ENCODE measurements at regions of chr12 and their contacts with region 1.

Region 1: GRCh38 chr12:52992699-52993557 is 13.3 kb upstream of the EIF4B start:
- DNase-seq: peak; percentile 66
- H3K4me3 Mint-ChIP-seq: peak overlapping the region; percentile 2
- H3K27ac Mint-ChIP-seq: peak overlapping the region; percentile 85
- H3K4me1 Mint-ChIP-seq: peaks cover 11% of the 10 kb centered on the region
- H3K27me3 Mint-ChIP-seq: no peaks in the 10 kb centered on the region
- CTCF ChIP-seq: no peak

Region 2: GRCh38 chr12:53005986-53006809 is 13.3 kb after region 1 on chr12 and contains the start of gene EIF4B:
- CTCF ChIA-PET with region 1: interaction called, 5 read pairs
- intact Hi-C with region 1: loop called (anchors 2 kb)
- DNase-seq: peak; percentile 98
- H3K4me3 Mint-ChIP-seq: peak within 1 kb of the TSS; percentile 95
- H3K27ac Mint-ChIP-seq: peak within 1 kb of the TSS; percentile 94
- H3K4me1 Mint-ChIP-seq: peaks cover 23% of the 10 kb centered on the region
- H3K27me3 Mint-ChIP-seq: no peaks in the 10 kb centered on the region
- CTCF ChIP-seq: no peak
- total RNA-seq, gene EIF4B: 242 and 272 TPM in 2 replicates

Measured in Calu3 (cell line).